Heart left ventricle (tissue), 16 donors: ENCODE measurements at regions of chr9 and their contacts with region 1.

Region 1: DNA sequence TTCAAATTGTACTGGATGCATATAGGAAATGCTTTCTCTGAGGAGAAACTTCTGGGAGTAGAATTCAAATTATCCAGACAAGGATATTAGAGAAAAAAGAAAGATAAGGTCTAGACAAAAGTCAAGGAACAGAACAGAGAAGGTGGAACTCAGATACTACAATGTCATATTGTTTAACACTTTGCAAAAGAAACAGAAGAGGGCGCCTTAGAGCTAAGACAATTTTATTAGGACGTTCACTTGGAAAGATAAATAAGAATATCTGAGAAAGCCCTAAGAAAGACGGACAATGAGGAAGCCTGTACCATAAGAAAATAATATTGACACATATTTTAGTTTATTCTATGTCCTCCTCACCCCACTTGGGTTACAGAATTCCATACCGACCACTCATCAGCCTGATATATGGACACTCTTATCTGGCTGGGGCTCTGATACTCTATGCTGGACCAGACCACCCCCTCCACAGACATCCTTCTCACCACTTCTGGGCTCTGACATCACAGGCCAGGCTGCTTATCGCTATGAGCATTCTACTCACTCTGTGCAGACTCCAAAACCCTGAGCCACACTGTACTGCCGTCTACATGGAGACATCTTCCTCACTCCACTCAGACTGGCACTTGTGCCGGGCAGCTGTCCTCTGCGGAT is 9.1 kb upstream of the AK3 start:
- DNase-seq: peak in 1 of 5 donors; percentile 37
- ATAC-seq: peak in 3 of 4 donors; percentile 42 to 77 (median 64)
- H3K4me3 ChIP-seq: no peak overlapping the region
- H3K27ac ChIP-seq: no peak overlapping the region
- H3K4me1 ChIP-seq: peaks cover 0 to 3% (median 0%) of the 10 kb centered on the region in 12 donors
- H3K27me3 ChIP-seq: no peaks in the 10 kb centered on the region
- CTCF ChIP-seq: peak; percentile 34 to 73 (median 58)
- POLR2A ChIP-seq: no peak

Region 2: DNA sequence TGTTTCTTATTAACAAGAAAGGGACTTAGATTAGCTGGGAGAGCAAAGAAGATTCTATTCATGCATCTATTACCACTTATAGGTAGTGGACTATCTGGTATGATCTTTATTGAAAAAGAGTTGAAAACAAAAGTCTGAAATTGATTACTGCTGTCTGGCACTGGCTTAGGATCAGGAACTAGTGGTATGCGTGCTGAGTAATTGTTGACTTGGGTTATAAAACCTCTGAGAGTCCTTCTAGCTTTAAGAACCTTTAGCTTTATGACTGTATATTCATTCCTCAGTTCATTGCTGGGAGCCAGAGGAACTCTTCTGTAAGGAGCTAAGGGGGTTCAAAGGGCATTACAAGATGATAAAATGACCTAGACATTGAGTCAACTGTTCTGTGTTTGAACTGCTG is 252.3 kb before region 1 on chr9:
- intact Hi-C with region 1: no loop called
- DNase-seq: no peak
- ATAC-seq: no peak
- H3K4me3 ChIP-seq: no peak overlapping the region
- H3K27ac ChIP-seq: peak overlapping the region in 1 of 12 donors; percentile 9
- H3K4me1 ChIP-seq: peaks cover 0 to 3% (median 0%) of the 10 kb centered on the region in 12 donors
- H3K27me3 ChIP-seq: peaks cover 0 to 3% (median 0%) of the 10 kb centered on the region in 9 donors
- CTCF ChIP-seq: no peak
- POLR2A ChIP-seq: no peak

Region 3: DNA sequence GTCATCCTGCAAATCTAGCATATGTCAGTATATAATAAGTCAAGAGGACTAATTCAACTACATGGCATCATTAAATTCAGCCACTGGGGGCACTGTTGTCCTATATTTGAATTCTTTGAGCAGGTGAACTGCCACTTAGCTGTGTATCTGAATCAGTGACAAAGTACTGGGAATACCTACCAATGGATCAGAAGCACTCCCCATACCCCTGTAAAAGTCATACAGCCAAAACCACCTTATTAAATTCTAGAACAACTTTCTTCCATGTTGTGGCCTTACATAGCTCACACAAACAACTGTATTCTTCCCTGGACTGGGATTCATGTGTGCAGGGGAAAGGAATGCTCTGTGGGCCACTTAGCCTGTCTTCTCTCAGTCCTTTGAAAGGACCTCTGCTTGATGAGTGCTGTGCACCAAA is 145.5 kb before region 1 on chr9:
- intact Hi-C with region 1: loop called in 1 of 10 experiments (anchors 10 kb)
- DNase-seq: peak in 4 of 5 donors; percentile 30 to 61 (median 52)
- ATAC-seq: peak in 3 of 4 donors; percentile 65 to 85 (median 74)
- H3K4me3 ChIP-seq: no peak overlapping the region
- H3K27ac ChIP-seq: no peak overlapping the region
- H3K4me1 ChIP-seq: peaks cover 0 to 4% (median 0%) of the 10 kb centered on the region in 12 donors
- H3K27me3 ChIP-seq: no peaks in the 10 kb centered on the region
- CTCF ChIP-seq: peak; percentile 62 to 86 (median 76)
- POLR2A ChIP-seq: no peak

Region 4: GRCh38 chr9:4792572-4793458 is 42.7 kb after region 1 on chr9 and contains the start of gene RCL1:
- intact Hi-C with region 1: loop called in 3 of 10 experiments (anchors 5 to 10 kb)
- DNase-seq: peak; percentile 96 to 98 (median 96)
- ATAC-seq: peak; percentile 99 to 100 (median 99)
- H3K4me3 ChIP-seq: peak within 1 kb of the TSS; percentile 62 to 98 (median 88)
- H3K27ac ChIP-seq: peak within 1 kb of the TSS; percentile 46 to 88 (median 81)
- H3K4me1 ChIP-seq: peaks cover 0 to 27% (median 17%) of the 10 kb centered on the region in 12 donors
- H3K27me3 ChIP-seq: no peaks in the 10 kb centered on the region
- CTCF ChIP-seq: no peak
- POLR2A ChIP-seq: peak in 1 of 2 donors; percentile 67
- total RNA-seq, gene RCL1: 5.1 to 10.1 (median 7.2) TPM